HepG2 (cell line): ENCODE measurements at regions of chr6 and their contacts with region 1.

Region 1: GRCh38 chr6:149431905-149432775 is 32.1 kb downstream of the SUMO4 start:
- DNase-seq: peak; percentile 83
- ATAC-seq: peak; percentile 95
- H3K4me3 ChIP-seq: 0 out of 6 replicates have a peak overlapping the region, but pooled peaks of 1 of the 3 experiments have one; percentile 22
- H3K27ac ChIP-seq: no peak overlapping the region
- H3K4me1 ChIP-seq: peaks cover 18% of the 10 kb centered on the region
- H3K27me3 ChIP-seq: peaks cover 4 to 20% of the 10 kb centered on the region in 2 experiments; a peak in 4 of 5 replicates
- CTCF ChIP-seq: peak; percentile 100
- EP300 ChIP-seq: no peak
- POLR2A ChIP-seq: no peak
- RAD21 ChIP-seq: peak; percentile 99

Region 2: DNA sequence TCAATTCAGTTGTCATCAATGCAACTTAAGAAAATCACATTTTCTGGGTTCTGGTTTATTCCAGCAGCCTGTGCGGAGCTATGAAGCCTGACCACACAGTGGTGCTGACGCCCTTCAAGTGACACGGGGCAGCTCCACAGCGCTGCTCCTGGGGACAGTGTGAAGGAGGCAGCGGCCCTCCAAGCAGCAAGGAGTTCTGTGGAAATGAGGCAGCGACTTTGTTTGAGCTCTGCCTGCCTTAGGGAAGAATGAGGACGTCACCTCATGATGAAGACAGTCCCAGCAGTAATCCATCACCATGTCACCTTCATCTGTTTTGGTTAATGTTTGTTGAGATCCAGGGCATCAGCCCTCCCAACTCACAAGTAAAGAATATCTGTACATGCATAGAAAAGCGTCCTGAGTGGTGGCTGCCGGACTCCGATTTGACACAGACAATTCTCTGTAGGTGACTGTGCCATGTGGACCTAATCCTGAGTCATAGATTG is 853.9 kb before region 1 on chr6:
- CTCF ChIA-PET with region 1: no interaction called
- POLR2A ChIA-PET with region 1: no interaction called
- in situ Hi-C with region 1: loop called (anchors 10 kb)
- intact Hi-C with region 1: loop called (anchors 5 kb)
- DNase-seq: peak; percentile 66
- ATAC-seq: peak; percentile 100
- H3K4me3 ChIP-seq: no peak overlapping the region
- H3K27ac ChIP-seq: no peak overlapping the region
- H3K4me1 ChIP-seq: no peaks in the 10 kb centered on the region
- H3K27me3 ChIP-seq: peaks cover 0 to 3% of the 10 kb centered on the region in 2 experiments; a peak in 2 of 5 replicates
- CTCF ChIP-seq: peak; percentile 93
- EP300 ChIP-seq: no peak
- POLR2A ChIP-seq: no peak
- RAD21 ChIP-seq: peak; percentile 93

Region 3: DNA sequence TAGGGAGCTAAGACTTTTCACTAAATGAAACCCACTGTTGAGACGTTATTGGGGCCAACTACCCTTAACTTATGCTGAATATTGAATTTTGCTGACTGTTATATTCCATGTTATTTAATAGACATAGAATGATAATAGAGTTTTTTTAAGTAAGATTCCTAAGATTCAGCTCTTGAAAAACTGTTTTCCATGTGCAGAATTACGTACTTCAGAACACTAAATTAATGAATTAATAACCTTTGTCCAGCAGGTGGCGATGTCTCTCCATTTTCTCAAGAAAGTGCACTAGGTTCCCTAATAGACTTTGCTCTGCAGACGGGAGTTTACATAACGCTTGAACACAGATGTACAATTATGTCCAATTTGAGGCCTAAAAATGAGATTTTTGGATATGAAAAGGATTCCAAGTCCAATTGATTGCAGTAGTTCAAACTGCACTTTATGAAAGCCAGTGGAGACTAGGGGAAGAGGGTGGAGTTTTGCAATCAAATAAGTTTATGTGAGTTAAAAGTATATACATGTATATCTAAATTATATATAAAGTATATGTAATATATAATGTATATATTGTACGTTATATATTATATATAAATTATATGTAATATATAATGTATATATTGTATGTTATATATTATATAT is 403.3 kb before region 1 on chr6:
- CTCF ChIA-PET with region 1: interaction called, 37 read pairs
- POLR2A ChIA-PET with region 1: interaction called, 4 read pairs
- in situ Hi-C with region 1: loop called (anchors 5 kb)
- intact Hi-C with region 1: loop called (anchors 1 kb)
- DNase-seq: peak; percentile 96
- ATAC-seq: peak; percentile 31
- H3K4me3 ChIP-seq: no peak overlapping the region
- H3K27ac ChIP-seq: no peak overlapping the region
- H3K4me1 ChIP-seq: peaks cover 47% of the 10 kb centered on the region
- H3K27me3 ChIP-seq: 0 out of 5 replicates have a peak, but pooled peaks cover 0 to 3% of the 10 kb centered on the region in 2 experiments
- CTCF ChIP-seq: peak; percentile 92
- EP300 ChIP-seq: peak in 1 of 2 experiments; percentile 53; a peak in 1 of 4 replicates
- POLR2A ChIP-seq: no peak
- RAD21 ChIP-seq: peak; percentile 91

Region 4: DNA sequence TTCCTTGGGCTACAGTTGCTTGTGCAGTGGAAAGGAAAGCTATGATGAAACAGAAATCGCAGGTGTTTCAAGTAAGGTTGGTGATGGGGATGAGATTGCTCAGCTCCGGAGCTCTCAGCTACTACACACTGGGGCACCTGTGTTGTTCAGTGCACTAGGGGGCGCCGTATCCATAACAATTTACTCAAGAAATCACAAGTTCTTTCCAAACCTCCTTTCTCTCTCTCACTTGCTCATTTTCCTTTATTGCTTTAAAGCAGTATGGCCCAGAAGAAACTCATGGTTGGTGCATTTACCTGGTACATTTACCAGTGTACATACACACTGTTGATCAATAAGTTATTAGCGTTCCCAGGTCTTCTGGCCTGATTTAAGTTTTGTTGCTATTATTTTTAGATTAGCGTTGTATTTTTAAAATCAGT is 349.8 kb before region 1 on chr6:
- CTCF ChIA-PET with region 1: interaction called, 36 read pairs
- POLR2A ChIA-PET with region 1: no interaction called
- in situ Hi-C with region 1: loop called (anchors 5 kb)
- intact Hi-C with region 1: loop called (anchors 1 kb)
- DNase-seq: peak; percentile 62
- ATAC-seq: peak; percentile 97
- H3K4me3 ChIP-seq: no peak overlapping the region
- H3K27ac ChIP-seq: no peak overlapping the region
- H3K4me1 ChIP-seq: peaks cover 23% of the 10 kb centered on the region
- H3K27me3 ChIP-seq: peaks cover 0 to 4% of the 10 kb centered on the region in 2 experiments; a peak in 1 of 5 replicates
- CTCF ChIP-seq: peak; percentile 90
- EP300 ChIP-seq: no peak
- POLR2A ChIP-seq: no peak
- RAD21 ChIP-seq: peak; percentile 91

Region 5: GRCh38 chr6:149513915-149514314 is 81.8 kb after region 1 on chr6:
- CTCF ChIA-PET with region 1: interaction called, 3 read pairs
- POLR2A ChIA-PET with region 1: no interaction called
- in situ Hi-C with region 1: no loop called
- intact Hi-C with region 1: loop called (anchors 5 kb)
- DNase-seq: no peak
- ATAC-seq: no peak
- H3K4me3 ChIP-seq: no peak overlapping the region
- H3K27ac ChIP-seq: no peak overlapping the region
- H3K4me1 ChIP-seq: peaks cover 18% of the 10 kb centered on the region
- H3K27me3 ChIP-seq: no peaks in the 10 kb centered on the region
- CTCF ChIP-seq: no peak
- EP300 ChIP-seq: no peak
- POLR2A ChIP-seq: no peak
- RAD21 ChIP-seq: no peak